PC-9 (cell line): ENCODE measurements at regions of chr4 and their contacts with region 1.

Region 1: DNA sequence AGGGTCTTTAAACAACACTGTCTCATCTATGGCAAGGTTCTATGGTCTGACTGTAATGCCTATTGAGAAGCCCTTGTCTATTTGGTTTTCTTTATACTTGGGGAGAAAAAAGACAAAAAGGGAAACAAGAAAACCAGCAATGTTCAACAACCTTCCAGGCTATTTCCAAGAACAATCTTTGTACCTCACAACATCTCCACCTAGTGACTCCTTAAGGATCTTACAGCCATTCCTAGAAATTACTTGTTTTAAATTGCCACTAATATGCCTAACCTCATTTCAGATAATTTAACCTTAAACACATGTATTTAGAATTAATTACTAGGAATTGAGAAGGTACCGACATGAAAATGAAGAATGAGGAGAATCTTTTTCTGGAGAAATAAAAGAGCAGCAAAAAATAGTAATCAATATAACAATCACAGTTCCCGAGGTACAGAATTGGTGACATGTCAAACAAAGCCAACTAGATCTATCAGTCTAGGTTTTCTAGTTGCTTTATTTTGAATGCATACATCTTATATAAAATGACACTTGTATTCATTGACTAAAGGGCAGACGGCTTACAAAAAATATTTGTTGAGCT is 1.6 kb upstream of the RBM46 start:
- DNase-seq: no peak
- H3K4me3 ChIP-seq: no peak overlapping the region
- H3K27ac ChIP-seq: no peak overlapping the region
- H3K4me1 ChIP-seq: no peaks in the 10 kb centered on the region
- H3K27me3 ChIP-seq: no peaks in the 10 kb centered on the region
- CTCF ChIP-seq: peak; percentile 65

Region 2: DNA sequence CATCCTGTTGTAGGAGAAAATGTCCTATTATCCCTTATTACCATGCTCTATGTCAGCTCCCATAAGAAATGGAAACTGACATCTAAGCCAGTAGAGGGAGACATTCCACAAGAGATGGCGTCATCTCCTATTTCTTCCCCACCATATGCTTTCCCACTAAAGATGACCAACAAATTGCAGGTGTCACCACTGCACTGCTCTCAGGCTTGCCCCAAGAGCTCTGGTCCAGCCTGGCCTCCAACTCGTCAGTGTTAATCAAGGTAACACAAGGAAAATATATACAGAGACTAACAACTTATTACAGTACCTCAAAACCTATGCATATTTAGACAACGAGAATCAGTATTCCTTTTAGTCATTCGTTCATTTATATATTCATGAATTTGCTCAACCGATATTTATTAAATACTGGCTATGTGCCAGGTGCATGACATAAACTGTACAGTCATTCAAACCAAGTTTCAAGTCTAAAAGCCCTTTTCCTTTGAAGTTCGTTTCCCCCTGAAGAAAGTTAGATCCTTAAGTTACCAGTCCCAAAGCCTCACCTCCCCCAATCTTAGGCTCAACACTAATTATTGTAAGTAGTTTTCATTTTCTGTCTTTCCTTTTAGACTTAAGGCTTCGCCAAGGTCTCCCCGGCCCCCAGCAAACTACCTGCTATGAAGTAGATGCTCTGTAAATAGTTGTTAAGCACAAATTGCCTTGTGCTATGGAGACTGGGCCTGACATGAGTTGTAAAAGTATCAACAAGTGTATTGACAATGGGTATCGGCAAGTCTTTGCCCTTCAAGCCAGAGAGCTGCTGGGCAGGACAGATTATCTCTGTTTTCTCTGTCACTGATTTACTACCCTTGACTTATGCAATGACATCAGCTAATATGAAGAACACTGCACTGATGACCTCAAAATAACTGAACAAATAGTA is 219.7 kb before region 1 on chr4:
- CTCF ChIA-PET with region 1: no interaction called
- POLR2A ChIA-PET with region 1: no interaction called
- intact Hi-C with region 1: loop called (anchors 5 kb)
- DNase-seq: no peak
- H3K4me3 ChIP-seq: no peak overlapping the region
- H3K27ac ChIP-seq: no peak overlapping the region
- H3K4me1 ChIP-seq: peaks cover 12% of the 10 kb centered on the region; the same call in 1 of the 2 replicates
- H3K27me3 ChIP-seq: no peaks in the 10 kb centered on the region
- CTCF ChIP-seq: peak; percentile 71

Region 3: GRCh38 chr4:154642373-154643009 is 137.0 kb before region 1 on chr4:
- CTCF ChIA-PET with region 1: no interaction called
- POLR2A ChIA-PET with region 1: no interaction called
- intact Hi-C with region 1: loop called (anchors 1 kb)
- DNase-seq: no peak
- H3K4me3 ChIP-seq: no peak overlapping the region
- H3K27ac ChIP-seq: no peak overlapping the region
- H3K4me1 ChIP-seq: no peaks in the 10 kb centered on the region
- H3K27me3 ChIP-seq: no peaks in the 10 kb centered on the region
- CTCF ChIP-seq: no peak

Region 4: GRCh38 chr4:154686838-154687237 is 92.6 kb before region 1 on chr4:
- CTCF ChIA-PET with region 1: interaction called, 4 read pairs
- POLR2A ChIA-PET with region 1: no interaction called
- intact Hi-C with region 1: loop called (anchors 1 kb)
- DNase-seq: no peak
- H3K4me3 ChIP-seq: no peak overlapping the region
- H3K27ac ChIP-seq: no peak overlapping the region
- H3K4me1 ChIP-seq: no peaks in the 10 kb centered on the region
- H3K27me3 ChIP-seq: no peaks in the 10 kb centered on the region
- CTCF ChIP-seq: peak; percentile 50

Region 5: GRCh38 chr4:154807042-154807630 is 27.7 kb after region 1 on chr4:
- CTCF ChIA-PET with region 1: no interaction called
- POLR2A ChIA-PET with region 1: no interaction called
- intact Hi-C with region 1: no loop called
- DNase-seq: no peak
- H3K4me3 ChIP-seq: no peak overlapping the region
- H3K27ac ChIP-seq: no peak overlapping the region
- H3K4me1 ChIP-seq: no peaks in the 10 kb centered on the region
- H3K27me3 ChIP-seq: no peaks in the 10 kb centered on the region
- CTCF ChIP-seq: peak; percentile 71

Region 6: DNA sequence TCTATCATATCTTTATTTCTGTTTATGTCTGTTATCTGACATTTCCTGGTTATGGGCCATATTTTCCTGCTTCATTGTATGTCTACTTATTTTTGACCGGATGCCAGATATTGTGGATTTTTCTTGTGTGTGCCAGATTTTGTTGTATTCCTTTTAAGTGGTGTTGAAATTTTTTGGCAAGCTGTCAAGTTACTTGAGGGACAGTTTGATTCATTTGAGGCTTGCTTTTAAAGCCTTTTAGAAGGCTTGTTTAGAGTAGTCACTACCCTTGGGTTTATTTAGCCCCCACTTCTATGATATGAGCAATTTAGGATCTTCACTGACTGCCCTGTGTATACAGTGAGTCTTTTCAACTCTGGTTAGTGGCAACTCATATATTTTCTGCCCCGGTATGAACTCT is 399.8 kb after region 1 on chr4:
- CTCF ChIA-PET with region 1: no interaction called
- POLR2A ChIA-PET with region 1: no interaction called
- intact Hi-C with region 1: no loop called
- DNase-seq: no peak
- H3K4me3 ChIP-seq: no peak overlapping the region
- H3K27ac ChIP-seq: no peak overlapping the region
- H3K4me1 ChIP-seq: no peaks in the 10 kb centered on the region
- H3K27me3 ChIP-seq: no peaks in the 10 kb centered on the region
- CTCF ChIP-seq: no peak